ENCODE measurements at regions of chr1 and their contacts with region 1.

Region 1: DNA sequence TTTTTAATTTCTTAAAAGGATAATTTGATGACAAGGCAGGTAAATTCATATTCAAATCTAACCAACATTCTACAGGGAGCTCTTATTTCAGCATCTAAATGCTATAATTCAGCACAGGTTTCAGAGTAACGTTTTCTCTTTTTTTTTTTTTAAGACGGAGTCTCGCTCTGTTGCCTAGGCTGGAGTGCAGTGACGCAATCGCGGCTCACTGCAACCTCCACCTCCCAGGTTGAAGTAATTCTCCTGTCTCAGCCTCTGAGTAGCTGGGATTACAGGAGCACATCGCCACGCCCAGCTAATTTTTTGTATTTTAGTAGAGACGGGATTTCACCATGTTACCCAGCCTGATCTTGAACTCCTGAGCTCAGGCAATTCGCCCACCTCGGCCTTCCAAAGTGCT is 66.5 kb downstream of the EIF4G3 start:
- DNase-seq: no peak
- H3K4me3 ChIP-seq: no peak overlapping the region
- H3K27ac ChIP-seq: no peak overlapping the region
- H3K4me1 ChIP-seq: no peaks in the 10 kb centered on the region
- H3K27me3 ChIP-seq: no peaks in the 10 kb centered on the region
- CTCF ChIP-seq: no peak

Region 2: DNA sequence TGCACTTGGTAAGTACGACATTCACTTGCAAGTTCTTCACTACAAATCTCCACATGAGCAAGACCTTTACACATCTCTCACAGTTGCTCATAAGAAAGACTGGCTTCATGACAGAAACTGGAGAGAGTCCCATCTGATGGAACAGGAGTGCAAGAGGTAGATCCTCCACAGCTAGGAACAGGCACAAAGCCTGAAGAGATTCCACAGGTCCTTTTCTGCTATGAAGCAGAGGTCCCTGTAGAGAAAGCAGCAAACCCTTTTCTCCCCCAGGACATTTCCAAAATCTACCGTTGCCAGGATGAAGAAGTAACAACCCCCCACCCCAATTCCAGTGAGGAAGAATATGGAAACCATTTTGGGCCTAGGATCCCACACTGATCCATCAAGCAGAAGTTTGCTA is 19.2 kb after region 1 on chr1:
- CTCF ChIA-PET with region 1: no interaction called
- POLR2A ChIA-PET with region 1: interaction called, 10 read pairs
- intact Hi-C with region 1: no loop called
- DNase-seq: no peak
- H3K4me3 ChIP-seq: no peak overlapping the region
- H3K27ac ChIP-seq: no peak overlapping the region
- H3K4me1 ChIP-seq: no peaks in the 10 kb centered on the region
- H3K27me3 ChIP-seq: no peaks in the 10 kb centered on the region
- CTCF ChIP-seq: no peak

Region 3: DNA sequence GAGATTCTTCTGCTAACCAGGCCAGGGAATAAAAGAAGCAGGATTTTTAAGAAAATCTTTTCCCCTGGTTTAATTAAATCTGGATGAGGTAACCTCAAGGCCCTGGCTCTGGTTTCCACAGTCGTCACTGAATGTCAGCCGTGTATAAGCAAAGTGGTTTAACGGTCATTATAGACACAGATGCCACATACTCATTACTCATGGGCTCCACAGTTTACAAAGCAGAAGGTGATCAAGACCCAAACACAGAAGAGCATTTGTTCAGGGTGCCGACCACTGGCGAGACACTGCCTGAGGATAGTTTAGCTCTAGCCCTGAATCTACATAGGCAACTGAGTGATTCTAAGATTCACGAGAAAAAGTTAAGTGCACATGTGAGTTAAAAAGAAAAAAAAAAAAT is 586.8 kb after region 1 on chr1:
- CTCF ChIA-PET with region 1: no interaction called
- POLR2A ChIA-PET with region 1: no interaction called
- intact Hi-C with region 1: no loop called
- DNase-seq: no peak
- H3K4me3 ChIP-seq: no peak overlapping the region
- H3K27ac ChIP-seq: no peak overlapping the region
- H3K4me1 ChIP-seq: no peaks in the 10 kb centered on the region
- H3K27me3 ChIP-seq: no peaks in the 10 kb centered on the region
- CTCF ChIP-seq: no peak